ENCODE measurements at regions of chr2 and their contacts with region 1.

Region 1: DNA sequence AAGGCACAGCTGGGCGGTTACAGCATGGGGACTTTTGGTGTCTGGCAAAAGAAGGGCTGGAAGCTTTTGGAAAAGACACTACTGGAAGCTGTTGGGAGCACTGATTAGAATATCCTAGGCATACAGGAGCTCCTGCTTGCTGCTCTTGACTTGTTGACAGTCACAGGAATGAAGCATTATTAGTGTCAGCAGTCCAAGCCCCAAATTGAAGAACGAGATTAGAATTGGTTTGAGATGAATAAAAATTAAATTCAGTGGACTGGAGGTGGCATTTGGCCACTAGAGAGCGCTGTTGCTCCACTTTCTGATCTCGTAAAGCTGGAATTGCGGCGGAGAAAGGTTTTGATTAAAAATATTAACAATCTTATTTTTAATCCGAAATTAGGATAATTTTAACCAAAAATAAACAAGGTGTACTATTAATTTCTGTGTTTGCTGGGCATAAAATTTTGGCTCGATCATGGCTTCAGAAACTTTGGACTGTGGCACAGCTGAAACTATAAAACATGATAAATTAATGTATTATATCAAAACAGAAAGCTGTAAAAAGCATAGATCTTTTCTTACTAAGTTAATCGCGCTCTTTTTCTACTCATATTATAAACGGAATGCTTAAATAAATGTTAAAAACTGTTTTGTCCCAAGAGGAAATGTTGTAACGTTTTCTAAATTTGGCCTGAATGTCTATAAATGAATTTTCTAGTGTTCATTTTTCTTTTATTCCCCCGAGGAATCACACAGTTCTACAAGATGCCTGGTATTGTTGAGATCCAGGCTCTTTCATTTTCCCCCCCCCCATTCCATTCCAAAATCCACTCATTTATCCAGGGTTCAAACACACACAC is 2.4 kb upstream of the HOXD8 start:
- DNase-seq: peak; percentile 42
- ATAC-seq: no peak
- H3K4me3 Mint-ChIP-seq: no peak overlapping the region
- H3K27ac Mint-ChIP-seq: no peak overlapping the region
- H3K4me1 Mint-ChIP-seq: peaks cover 32% of the 10 kb centered on the region
- H3K27me3 Mint-ChIP-seq: peaks cover 63% of the 10 kb centered on the region
- CTCF ChIP-seq: peak; percentile 61

Region 2: GRCh38 chr2:176085861-176086771 is 41.0 kb before region 1 on chr2:
- CTCF ChIA-PET with region 1: interaction called, 3 read pairs
- POLR2A ChIA-PET with region 1: no interaction called
- intact Hi-C with region 1: loop called (anchors 2 kb)
- DNase-seq: peak; percentile 15
- ATAC-seq: no peak
- H3K4me3 Mint-ChIP-seq: no peak overlapping the region
- H3K27ac Mint-ChIP-seq: no peak overlapping the region
- H3K4me1 Mint-ChIP-seq: peaks cover 5% of the 10 kb centered on the region
- H3K27me3 Mint-ChIP-seq: peaks cover 81% of the 10 kb centered on the region
- CTCF ChIP-seq: no peak

Region 3: DNA sequence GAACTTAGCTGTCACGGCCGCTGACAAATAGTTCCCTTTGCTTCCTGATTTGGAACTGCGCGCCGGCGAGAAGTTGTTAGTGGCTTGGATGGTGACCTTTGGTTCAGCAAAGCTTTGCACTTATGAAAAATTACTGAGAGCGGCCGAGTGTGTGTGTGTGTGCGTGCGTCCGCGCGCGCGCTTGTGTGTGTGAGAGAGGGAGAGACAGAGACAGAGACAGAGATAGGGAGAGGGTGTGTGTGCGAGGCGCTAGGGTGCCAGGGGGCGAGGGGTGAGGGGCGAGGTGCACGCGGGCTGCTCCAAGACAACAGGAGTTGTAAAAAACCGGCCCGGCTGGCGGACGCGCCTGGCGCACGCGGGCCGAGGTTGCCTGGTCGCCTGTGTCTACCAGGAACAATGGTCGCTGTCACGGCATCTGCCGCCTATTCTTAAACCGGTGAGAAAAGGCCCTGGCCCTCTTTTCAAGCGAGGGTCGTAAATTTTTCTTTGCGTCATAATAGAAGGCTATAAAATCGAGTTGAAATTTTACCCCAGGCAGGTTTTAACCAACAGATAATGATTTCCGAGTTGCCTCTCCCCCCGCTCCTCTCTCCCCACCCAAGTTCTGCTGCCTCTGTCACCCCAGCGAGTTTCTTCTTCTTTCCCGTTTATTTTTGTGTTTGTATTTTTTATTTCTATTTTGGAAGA is 30.5 kb after region 1 on chr2:
- CTCF ChIA-PET with region 1: no interaction called
- POLR2A ChIA-PET with region 1: no interaction called
- intact Hi-C with region 1: loop called (anchors 2 kb)
- DNase-seq: no peak
- ATAC-seq: no peak
- H3K4me3 Mint-ChIP-seq: no peak overlapping the region
- H3K27ac Mint-ChIP-seq: no peak overlapping the region
- H3K4me1 Mint-ChIP-seq: peaks cover 3% of the 10 kb centered on the region
- H3K27me3 Mint-ChIP-seq: peaks cover 58% of the 10 kb centered on the region
- CTCF ChIP-seq: no peak

Region 4: GRCh38 chr2:176554101-176555048 is 427.2 kb after region 1 on chr2:
- CTCF ChIA-PET with region 1: interaction called, 22 read pairs
- POLR2A ChIA-PET with region 1: no interaction called
- intact Hi-C with region 1: loop called (anchors 1 kb)
- DNase-seq: no peak
- ATAC-seq: peak; percentile 49
- H3K4me3 Mint-ChIP-seq: peak overlapping the region; percentile 71
- H3K27ac Mint-ChIP-seq: no peak overlapping the region
- H3K4me1 Mint-ChIP-seq: peaks cover 11% of the 10 kb centered on the region
- H3K27me3 Mint-ChIP-seq: peaks cover 30% of the 10 kb centered on the region
- CTCF ChIP-seq: peak; percentile 80

Region 5: DNA sequence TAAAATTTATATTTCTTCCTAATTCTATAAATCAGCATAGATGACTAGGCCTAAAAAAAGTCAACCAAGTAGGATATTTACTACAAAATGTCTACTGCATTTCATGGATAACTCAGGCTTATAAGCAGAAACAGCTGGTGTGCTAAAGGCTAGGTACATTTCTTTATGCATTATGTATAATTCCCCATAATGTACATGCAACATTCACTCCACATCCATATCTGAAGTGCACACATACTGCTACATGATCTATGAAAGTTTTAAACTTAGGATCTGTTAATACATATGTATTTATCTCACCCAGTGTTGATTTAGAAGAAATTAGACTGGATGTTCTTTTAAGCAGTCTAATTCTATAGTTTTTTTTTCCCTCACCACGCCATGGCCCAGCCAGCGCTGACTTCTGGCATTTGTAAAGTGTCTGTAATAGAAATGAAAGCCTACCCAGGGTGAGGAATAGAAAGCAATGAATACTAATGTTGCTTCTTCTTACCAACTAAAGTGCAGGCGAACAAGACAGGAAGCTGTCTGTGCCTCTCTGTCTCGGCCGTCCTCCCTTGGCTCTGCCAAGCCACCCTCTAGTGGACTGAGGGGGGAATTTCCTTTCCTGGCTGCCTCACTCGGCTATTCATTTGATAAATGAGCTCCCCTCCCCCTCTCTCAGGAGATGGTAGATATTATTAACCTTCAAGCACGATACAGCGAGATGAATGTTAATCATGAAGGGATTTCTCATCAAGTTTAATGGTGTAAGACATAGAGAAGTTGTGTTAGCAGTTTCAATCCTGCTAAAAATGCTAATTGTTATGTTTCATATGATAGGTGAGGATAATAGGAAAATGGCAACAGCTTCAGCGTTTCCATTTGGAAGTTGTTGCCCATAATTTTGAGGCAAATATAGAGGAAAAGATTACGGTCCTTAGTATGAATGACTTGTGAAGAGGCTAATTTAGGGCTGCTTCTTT is 526.6 kb after region 1 on chr2:
- CTCF ChIA-PET with region 1: interaction called, 94 read pairs
- POLR2A ChIA-PET with region 1: no interaction called
- intact Hi-C with region 1: loop called (anchors 1 kb)
- DNase-seq: no peak
- ATAC-seq: peak; percentile 74
- H3K4me3 Mint-ChIP-seq: no peak overlapping the region
- H3K27ac Mint-ChIP-seq: no peak overlapping the region
- H3K4me1 Mint-ChIP-seq: no peaks in the 10 kb centered on the region
- H3K27me3 Mint-ChIP-seq: peaks cover 23% of the 10 kb centered on the region
- CTCF ChIP-seq: no peak

Region 6: DNA sequence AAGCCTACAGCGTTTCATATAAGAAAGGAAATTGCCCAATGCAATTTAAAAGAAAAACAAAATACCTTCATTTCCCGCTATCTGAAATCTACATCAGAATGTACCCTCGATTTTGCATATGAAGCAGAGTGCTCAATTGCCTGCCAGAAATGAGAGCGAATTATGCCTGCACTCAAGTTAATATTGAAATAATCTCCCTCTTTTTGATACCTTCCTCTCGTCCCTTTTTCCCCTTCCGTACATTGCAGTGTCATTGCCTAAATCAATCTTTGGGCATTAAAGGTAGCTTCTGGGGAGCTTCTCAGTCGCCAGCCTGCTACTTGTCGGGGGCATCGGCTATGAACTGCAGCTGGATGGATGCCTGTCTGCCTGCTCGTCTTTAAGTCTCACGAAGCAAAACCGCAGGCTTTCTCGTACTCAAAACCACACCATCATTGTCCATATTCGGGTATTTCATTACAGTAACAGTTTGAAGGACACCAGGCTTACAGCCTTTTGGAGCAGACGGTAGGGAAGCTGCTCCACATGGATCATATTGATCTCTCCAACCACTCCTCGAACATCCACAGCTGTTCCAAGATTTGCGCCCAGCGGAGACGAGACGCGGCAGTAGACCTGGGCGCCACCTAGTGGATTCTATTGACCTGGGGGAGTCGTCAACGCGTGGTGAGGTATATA is 1021.5 kb after region 1 on chr2:
- CTCF ChIA-PET with region 1: interaction called, 30 read pairs
- POLR2A ChIA-PET with region 1: no interaction called
- intact Hi-C with region 1: loop called (anchors 1 kb)
- DNase-seq: peak; percentile 46
- ATAC-seq: peak; percentile 84
- H3K4me3 Mint-ChIP-seq: peak overlapping the region; percentile 89
- H3K27ac Mint-ChIP-seq: peak overlapping the region; percentile 36
- H3K4me1 Mint-ChIP-seq: peaks cover 15% of the 10 kb centered on the region
- H3K27me3 Mint-ChIP-seq: peaks cover 14% of the 10 kb centered on the region
- CTCF ChIP-seq: peak; percentile 36

Region 7: GRCh38 chr2:177763532-177764265 is 1636.5 kb after region 1 on chr2:
- CTCF ChIA-PET with region 1: no interaction called
- POLR2A ChIA-PET with region 1: no interaction called
- intact Hi-C with region 1: loop called (anchors 2 kb)
- DNase-seq: peak; percentile 54
- ATAC-seq: peak; percentile 94
- H3K4me3 Mint-ChIP-seq: peak overlapping the region; percentile 64
- H3K27ac Mint-ChIP-seq: no peak overlapping the region
- H3K4me1 Mint-ChIP-seq: peaks cover 10% of the 10 kb centered on the region
- H3K27me3 Mint-ChIP-seq: peaks cover 21% of the 10 kb centered on the region
- CTCF ChIP-seq: peak; percentile 58

Measured in activated B cell treated with CpG ODN at 0.5 μM for 24 hours (primary cell).